Endothelial cell of umbilical vein (primary cell): ENCODE measurements at regions of chr19 and their contacts with region 1.

Region 1: DNA sequence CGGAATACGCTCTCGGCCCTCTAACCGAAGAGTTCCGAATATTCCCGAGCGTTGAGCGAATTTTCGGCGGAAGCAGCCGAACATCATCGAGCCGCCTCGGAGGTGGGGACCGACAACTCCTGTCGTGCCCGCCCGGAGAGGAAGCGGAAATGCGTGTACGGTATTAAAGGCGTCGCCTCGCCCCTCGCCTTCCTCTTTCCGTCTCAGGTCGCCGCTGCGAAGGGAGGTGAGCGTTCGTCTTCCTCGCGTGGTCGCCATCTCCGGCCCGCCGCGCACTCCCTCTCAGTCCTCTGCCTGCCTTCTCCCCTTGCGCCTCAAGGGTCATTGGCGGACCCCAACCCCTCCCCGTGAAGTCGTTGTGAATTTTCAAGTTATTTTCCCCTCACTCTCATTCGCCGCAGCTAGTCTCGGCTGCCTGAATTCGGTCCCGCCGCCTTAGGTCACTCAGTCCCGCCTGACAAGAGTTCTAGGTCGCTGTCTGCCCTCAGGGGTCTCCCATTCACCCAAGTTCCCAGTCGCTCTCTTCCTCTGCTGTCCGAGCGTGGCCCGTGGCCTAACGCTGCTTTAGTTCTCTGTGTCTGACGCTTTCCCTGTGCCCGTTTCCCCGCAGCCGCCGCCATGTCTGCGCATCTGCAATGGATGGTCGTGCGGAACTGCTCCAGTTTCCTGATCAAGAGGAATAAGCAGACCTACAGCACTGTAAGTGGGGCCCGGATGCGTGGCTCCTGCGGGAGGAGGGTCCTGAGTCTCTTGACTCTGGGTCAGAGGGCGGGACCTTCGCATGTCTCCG is at the start of gene RPL28:
- DNase-seq: peak; percentile 99
- H3K4me3 ChIP-seq: peak within 1 kb of the TSS; percentile 33 to 69 (median 67)
- H3K27ac ChIP-seq: peak within 1 kb of the TSS; percentile 75
- H3K4me1 ChIP-seq: peaks cover 31% of the 10 kb centered on the region
- H3K27me3 ChIP-seq: no peaks in the 10 kb centered on the region
- CTCF ChIP-seq: no peak
- POLR2A ChIP-seq: peak; percentile 100
- total RNA-seq, gene RPL28: 1,738 and 1,872 TPM in 2 replicates

Region 2: DNA sequence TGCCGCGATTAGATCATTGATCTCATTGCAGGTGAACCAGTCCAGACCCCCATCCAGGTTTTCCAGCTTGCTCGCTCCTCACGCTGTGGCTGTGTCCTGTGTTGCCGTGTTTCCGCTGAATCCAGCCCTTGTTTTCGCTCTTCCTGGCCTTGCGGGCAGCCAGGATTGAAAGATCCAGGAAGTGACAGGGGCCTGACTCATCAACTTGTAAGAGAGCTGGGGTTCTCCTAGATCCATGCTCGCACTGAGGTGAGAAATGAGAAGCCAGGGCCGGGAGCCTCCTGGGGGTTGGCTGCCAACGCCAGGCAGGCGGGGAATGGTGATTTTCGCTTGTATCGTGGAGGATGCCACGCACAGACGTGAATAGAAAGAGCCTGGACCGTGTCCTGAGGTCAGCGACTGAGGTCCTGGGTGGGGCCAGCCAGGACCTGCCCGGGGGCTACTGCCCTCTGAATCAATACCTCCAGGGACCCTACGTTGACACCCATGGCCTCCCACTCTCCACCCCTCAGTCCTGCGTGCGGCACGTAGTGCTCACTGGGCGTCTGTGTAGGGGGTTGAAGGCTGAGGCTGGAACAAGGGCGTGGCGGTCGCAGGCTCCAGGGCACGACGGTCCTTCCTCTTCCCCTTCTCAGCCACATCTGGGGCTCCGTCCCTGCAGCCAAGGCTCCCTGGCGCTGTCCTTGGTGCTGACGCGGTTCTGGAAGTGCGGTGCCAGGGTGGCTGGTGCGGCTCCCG is 169.3 kb before region 1 on chr19:
- CTCF ChIA-PET with region 1: no interaction called
- POLR2A ChIA-PET with region 1: no interaction called
- dilution Hi-C with region 1: no loop called
- intact Hi-C with region 1: loop called (anchors 1 kb)
- DNase-seq: peak; percentile 97
- H3K4me3 ChIP-seq: peak overlapping the region in 1 of 3 experiments; percentile 3
- H3K27ac ChIP-seq: peak overlapping the region; percentile 65
- H3K4me1 ChIP-seq: peaks cover 9% of the 10 kb centered on the region
- H3K27me3 ChIP-seq: no peaks in the 10 kb centered on the region
- CTCF ChIP-seq: no peak
- POLR2A ChIP-seq: no peak

Region 3: GRCh38 chr19:55289117-55289796 is 96.7 kb before region 1 on chr19:
- CTCF ChIA-PET with region 1: interaction called, 27 read pairs
- POLR2A ChIA-PET with region 1: no interaction called
- dilution Hi-C with region 1: no loop called
- intact Hi-C with region 1: no loop called
- DNase-seq: no peak
- H3K4me3 ChIP-seq: no peak overlapping the region
- H3K27ac ChIP-seq: no peak overlapping the region
- H3K4me1 ChIP-seq: no peaks in the 10 kb centered on the region
- H3K27me3 ChIP-seq: no peaks in the 10 kb centered on the region
- CTCF ChIP-seq: no peak
- POLR2A ChIP-seq: no peak

Region 4: DNA sequence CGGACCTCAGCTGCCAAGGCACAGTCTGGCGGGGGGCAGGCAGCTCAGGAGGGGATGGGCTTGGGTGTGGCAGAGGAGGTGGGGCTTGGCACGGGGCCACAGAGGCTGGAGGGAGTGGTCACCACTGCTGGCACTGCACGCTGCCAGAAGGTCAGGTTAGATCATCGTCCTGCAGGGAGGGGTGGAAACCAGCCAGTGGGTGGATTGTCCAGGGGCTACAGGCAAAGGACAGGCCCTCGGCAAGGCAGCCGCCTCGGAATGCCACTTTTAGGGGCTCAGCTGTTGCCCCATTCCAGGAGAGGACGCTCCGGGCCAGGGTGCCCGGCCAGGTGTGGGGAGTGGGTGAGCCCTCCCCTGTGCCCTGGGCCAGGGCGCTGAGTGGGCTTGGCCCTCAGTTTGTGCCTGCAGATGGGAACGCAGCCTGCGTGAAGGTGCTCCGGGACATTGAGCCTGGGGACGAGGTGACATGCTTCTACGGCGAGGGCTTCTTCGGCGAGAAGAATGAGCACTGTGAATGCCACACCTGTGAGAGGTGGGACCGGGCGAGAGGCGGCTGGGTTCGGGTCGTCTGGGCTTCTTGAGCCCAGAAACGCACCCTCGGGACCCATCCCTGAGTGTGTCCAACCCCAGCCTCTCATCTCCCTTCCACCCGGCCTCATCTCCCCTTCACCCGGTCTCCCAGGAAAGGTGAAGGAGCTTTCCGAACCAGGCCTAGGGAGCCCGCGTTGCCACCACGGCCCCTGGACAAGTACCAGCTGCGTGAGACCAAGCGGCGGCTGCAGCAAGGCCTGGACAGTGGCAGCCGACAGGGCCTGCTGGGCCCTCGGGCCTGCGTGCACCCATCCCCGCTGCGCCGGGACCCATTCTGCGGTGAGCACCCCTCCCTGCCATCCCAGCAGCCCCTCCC is 39.9 kb before region 1 on chr19:
- CTCF ChIA-PET with region 1: no interaction called
- POLR2A ChIA-PET with region 1: no interaction called
- dilution Hi-C with region 1: no loop called
- intact Hi-C with region 1: no loop called
- DNase-seq: no peak
- H3K4me3 ChIP-seq: no peak overlapping the region
- H3K27ac ChIP-seq: no peak overlapping the region
- H3K4me1 ChIP-seq: no peaks in the 10 kb centered on the region
- H3K27me3 ChIP-seq: no peaks in the 10 kb centered on the region
- CTCF ChIP-seq: no peak
- POLR2A ChIP-seq: no peak

Region 5: DNA sequence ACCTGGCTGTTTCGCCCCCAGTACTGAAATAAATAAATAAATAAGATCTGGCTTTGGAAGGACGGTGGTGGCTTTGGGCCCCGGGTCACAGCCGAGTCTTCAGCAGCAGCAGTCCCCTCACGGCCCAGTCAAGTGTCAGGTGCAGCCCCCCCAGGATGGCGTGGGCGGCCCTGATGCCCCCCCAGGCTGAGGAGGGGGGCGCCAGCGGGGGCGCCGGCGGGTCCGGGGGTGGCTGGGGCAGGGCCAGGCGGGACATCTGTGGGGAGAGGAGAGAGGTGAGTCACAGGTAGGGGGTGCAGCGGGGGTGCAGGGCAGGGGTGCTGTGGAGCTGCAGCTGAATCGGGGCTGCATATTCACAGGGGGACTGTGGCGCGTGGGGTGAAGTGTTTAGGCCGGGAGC is 20.0 kb before region 1 on chr19:
- CTCF ChIA-PET with region 1: no interaction called
- POLR2A ChIA-PET with region 1: no interaction called
- dilution Hi-C with region 1: no loop called
- intact Hi-C with region 1: no loop called
- DNase-seq: no peak
- H3K4me3 ChIP-seq: no peak overlapping the region
- H3K27ac ChIP-seq: no peak overlapping the region
- H3K4me1 ChIP-seq: peaks cover 3% of the 10 kb centered on the region
- H3K27me3 ChIP-seq: peaks cover 7 to 17% of the 10 kb centered on the region in 2 experiments
- CTCF ChIP-seq: no peak
- POLR2A ChIP-seq: no peak

Region 6: GRCh38 chr19:55407800-55408532 is 22.0 kb after region 1 on chr19:
- CTCF ChIA-PET with region 1: interaction called, 3 read pairs
- POLR2A ChIA-PET with region 1: interaction called, 11 read pairs
- dilution Hi-C with region 1: no loop called
- intact Hi-C with region 1: loop called (anchors 1 kb)
- DNase-seq: peak; percentile 100
- H3K4me3 ChIP-seq: peak overlapping the region in 2 of 3 experiments; percentile 28 to 90
- H3K27ac ChIP-seq: peak overlapping the region; percentile 90
- H3K4me1 ChIP-seq: peaks cover 13% of the 10 kb centered on the region
- H3K27me3 ChIP-seq: peaks cover 2 to 5% of the 10 kb centered on the region in 2 experiments
- CTCF ChIP-seq: no peak
- POLR2A ChIP-seq: peak; percentile 58

Region 7: DNA sequence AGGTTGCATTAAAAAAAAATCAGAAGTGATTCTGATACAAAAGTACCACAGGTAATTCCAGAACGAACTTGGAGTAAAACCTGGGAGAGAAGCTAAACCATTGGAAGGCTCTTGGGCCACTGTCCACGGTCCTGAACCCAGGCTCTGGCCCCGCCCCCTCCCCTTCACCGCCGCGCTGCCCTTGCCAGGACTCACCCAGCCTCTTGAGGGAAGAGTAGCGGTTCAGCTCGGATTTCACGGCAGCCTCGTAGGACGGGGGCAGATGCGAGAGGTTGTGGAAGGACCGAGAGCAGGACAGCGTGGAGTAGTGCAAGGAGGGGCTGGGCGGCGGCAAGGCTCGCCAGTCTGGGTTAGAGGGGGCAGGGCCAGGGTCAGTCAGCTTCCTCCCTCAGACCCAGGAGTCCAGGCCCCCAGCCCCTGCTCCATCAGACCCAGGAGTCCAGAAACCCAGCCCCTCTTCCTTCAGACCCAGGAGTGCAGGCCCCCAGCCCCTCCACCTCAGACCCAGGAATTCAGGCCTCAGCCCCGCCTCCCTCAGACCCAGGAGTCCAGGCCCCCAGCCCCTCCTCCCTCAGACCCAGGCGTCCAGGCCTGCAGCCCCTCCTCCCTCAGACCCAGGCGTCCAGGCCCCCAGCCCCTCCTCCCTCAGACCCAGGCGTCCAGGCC is 51.6 kb after region 1 on chr19:
- CTCF ChIA-PET with region 1: no interaction called
- POLR2A ChIA-PET with region 1: no interaction called
- dilution Hi-C with region 1: no loop called
- intact Hi-C with region 1: no loop called
- DNase-seq: peak; percentile 55
- H3K4me3 ChIP-seq: no peak overlapping the region
- H3K27ac ChIP-seq: no peak overlapping the region
- H3K4me1 ChIP-seq: no peaks in the 10 kb centered on the region
- H3K27me3 ChIP-seq: peaks cover 23 to 27% of the 10 kb centered on the region in 2 experiments
- CTCF ChIP-seq: no peak
- POLR2A ChIP-seq: no peak

Region 8: DNA sequence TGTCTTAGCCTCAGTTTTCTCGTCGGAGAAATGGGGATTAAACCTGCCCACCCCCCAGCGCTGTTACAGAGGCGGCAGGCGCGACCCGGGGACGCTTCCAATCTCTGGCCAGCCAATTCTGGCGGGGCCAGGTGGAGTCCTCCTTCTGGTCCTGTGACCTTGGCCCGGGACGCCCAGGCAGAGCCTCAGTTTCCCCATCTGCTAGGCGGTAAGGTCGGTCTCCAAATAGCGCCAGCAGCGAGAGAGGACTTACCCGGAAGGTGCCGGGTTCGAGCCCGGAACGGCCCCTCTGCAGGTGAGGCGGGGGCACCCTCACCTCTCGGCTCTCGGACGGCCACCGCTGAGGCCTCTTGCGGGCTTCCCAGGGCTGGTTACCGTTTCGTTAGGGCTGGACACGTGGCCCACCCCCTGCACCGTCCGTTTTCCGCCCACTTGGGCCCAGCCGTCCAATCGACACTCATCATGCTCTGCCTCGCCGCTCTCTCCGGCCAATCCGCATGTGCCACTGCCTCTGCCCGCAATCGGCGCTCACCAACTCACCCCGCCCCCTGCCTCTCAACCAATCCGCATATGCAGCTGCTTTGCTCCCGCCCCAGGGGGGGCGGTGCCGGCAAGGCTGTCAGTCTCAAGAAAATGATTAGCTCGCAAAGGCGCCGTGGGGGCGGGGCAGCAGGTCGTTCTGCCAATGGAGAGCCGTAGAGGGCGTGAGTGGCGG is 75.5 kb after region 1 on chr19 and contains the start of gene ISOC2:
- CTCF ChIA-PET with region 1: no interaction called
- POLR2A ChIA-PET with region 1: no interaction called
- dilution Hi-C with region 1: no loop called
- intact Hi-C with region 1: loop called (anchors 2 kb)
- DNase-seq: peak; percentile 100
- H3K4me3 ChIP-seq: peak within 1 kb of the TSS; percentile 39 to 95 (median 70)
- H3K27ac ChIP-seq: peak within 1 kb of the TSS; percentile 63
- H3K4me1 ChIP-seq: peaks cover 13% of the 10 kb centered on the region
- H3K27me3 ChIP-seq: no peaks in the 10 kb centered on the region
- CTCF ChIP-seq: no peak
- POLR2A ChIP-seq: no peak
- total RNA-seq, gene ISOC2: 43.6 and 49.3 TPM in 2 replicates